Activated T-helper 2 cell treated with anti-CD3 and anti-CD28 coated beads, Interferon-gamma antibody, Interleukin-2, Interleukin-4, amounts not matched to agents 10 μg/mL and 5 μg/mL and 100 μg/mL, durations not matched to agents 14 hours and 24 hours and 36 hours (primary cell): ENCODE measurements at regions of chr12 and their contacts with region 1.

Region 1: DNA sequence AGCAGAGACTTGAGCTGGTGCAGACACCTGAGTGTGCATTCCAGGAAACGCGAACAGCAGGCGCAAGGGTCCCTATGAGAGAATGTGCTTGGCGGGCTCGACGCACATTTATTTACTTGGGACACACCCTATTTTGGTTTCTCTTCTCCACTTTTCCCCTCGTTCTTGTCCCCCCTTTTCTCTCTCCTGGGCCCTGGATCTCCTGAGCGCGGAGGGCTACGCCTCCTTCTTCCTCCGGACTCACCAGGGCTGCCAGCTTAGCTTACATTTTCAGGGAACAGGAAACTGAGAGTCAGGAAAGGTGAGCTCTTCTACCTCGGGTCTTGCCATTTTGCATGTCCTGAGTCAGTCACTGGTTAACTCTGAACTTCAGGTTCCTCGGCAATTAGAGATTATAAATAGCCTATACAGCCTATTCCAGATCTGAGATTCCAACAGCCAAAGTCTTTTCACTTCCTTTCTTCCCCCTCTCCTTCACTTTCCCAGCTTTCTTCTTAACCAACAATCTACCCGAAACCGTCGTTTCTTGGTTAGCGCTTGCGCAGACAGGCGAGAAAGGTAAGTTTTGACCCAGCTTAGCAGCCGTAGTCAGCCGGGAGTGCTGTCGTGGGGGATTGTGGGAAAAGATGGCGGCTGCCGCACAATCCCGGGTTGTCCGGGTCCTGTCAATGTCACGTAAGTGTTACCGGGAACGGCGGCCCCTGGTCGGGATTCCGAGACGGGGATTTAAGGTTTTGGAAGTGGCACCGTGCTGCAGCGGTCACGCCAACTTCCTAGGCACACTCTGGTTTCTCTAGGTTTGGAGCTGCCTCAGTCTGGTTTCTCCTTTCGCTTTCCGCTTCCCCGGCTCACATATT is at the starts of genes AKAP3 and NDUFA9:
- DNase-seq: peak; percentile 80
- H3K4me3 Mint-ChIP-seq: peak within 1 kb of the TSS; percentile 100
- H3K27ac Mint-ChIP-seq: peak within 1 kb of the TSS; percentile 97
- H3K4me1 Mint-ChIP-seq: peaks cover 42% of the 10 kb centered on the region
- H3K27me3 Mint-ChIP-seq: no peaks in the 10 kb centered on the region
- total RNA-seq, gene AKAP3: 0.55 and 0.71 TPM in 2 replicates
- total RNA-seq, gene NDUFA9: 124 and 125 TPM in 2 replicates

Region 2: DNA sequence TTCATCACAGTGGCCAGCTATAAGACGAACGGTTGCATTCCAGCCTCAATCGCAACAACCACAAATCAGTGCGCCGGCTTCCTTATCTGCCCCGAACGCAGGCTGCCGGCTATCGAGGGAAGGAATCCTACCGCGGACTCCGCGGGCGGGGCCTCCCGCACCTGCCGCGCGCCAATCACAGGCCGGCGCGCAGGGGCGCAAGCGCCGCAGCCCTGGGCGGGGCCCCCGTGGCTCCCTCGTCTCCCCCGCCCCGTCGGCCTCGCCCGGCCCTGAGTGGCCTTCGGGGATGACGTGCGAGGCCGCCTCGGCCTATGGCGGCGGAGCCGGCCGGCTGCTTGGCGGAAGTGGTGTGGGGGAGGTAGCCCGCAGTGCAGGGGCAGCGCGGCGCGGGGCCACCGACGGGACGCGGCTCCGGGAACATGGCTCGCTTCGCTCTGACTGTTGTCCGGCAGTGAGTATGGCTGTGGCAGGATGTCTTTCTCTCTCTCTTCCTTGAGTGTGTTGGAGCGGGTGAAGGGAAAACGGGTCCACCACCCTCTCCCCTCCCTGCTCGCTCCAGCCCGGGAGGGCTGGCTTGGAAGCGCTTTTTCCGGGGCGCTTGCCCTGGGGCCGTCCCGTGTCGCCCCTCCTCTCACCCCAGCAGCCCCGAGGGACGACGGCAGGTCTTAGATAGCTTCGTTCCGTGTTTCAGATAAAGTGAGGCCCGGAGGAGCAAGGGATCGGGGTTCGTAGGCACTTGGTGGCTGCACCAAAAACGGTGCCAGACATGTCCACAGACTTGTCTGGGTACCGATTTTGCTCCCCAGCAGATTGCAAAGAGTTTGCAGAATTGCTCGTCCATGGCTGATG is 327.7 kb before region 1 on chr12 and contains the start of gene TIGAR:
- intact Hi-C with region 1: loop called (anchors 5 kb)
- DNase-seq: peak; percentile 92
- H3K4me3 Mint-ChIP-seq: peak within 1 kb of the TSS; percentile 93
- H3K27ac Mint-ChIP-seq: peak within 1 kb of the TSS; percentile 76
- H3K4me1 Mint-ChIP-seq: peaks cover 35% of the 10 kb centered on the region
- H3K27me3 Mint-ChIP-seq: no peaks in the 10 kb centered on the region
- total RNA-seq, gene TIGAR: 8.7 and 9.5 TPM in 2 replicates

Region 3: DNA sequence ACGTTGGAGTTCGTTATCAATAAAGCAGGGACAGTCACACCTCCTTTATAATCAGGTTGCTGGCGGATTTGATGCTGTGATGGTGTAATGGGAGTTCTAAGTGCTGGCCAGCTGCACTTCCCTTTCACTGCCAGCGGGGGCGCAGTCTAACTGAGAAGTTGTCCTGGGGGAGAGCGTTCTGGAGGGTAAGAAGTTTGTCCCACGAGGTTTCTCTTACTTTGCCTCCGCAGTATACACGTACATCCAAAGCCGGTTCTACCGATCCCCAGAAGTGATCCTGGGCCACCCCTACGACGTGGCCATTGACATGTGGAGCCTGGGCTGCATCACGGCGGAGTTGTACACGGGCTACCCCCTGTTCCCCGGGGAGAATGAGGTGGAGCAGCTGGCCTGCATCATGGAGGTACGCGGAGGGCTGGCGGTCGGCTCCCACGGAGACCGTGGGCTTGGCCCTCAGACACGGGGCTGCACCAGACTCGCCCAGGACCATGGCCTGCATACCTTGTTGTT is 44.0 kb before region 1 on chr12:
- intact Hi-C with region 1: loop called (anchors 1 kb)
- DNase-seq: peak; percentile 70
- H3K4me3 Mint-ChIP-seq: peak overlapping the region; percentile 93
- H3K27ac Mint-ChIP-seq: peak overlapping the region; percentile 85
- H3K4me1 Mint-ChIP-seq: peaks cover 12% of the 10 kb centered on the region
- H3K27me3 Mint-ChIP-seq: peaks cover 20% of the 10 kb centered on the region

Region 4: DNA sequence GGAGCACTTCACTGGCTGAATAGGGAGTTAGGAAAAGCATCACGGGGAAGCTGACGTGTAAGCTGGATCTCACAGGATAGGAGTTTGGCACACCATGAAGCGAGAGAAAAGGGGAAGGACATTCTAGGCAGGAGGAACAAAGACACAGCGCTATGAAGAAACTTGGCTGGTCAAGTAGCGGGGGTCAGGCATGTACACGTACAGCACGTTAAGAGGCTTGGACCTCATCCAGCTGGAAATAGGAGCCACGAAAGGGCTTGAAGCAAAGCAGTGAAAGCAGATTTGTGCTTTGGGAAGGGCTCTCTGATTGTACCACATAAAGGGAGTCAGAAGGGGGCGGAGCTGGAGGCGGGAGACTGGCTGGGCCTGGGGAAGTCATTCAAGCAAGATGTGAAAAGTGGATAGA is 51.9 kb after region 1 on chr12:
- intact Hi-C with region 1: no loop called
- DNase-seq: no peak
- H3K4me3 Mint-ChIP-seq: no peak overlapping the region
- H3K27ac Mint-ChIP-seq: no peak overlapping the region
- H3K4me1 Mint-ChIP-seq: peaks cover 2% of the 10 kb centered on the region
- H3K27me3 Mint-ChIP-seq: peaks cover 1% of the 10 kb centered on the region

Region 5: DNA sequence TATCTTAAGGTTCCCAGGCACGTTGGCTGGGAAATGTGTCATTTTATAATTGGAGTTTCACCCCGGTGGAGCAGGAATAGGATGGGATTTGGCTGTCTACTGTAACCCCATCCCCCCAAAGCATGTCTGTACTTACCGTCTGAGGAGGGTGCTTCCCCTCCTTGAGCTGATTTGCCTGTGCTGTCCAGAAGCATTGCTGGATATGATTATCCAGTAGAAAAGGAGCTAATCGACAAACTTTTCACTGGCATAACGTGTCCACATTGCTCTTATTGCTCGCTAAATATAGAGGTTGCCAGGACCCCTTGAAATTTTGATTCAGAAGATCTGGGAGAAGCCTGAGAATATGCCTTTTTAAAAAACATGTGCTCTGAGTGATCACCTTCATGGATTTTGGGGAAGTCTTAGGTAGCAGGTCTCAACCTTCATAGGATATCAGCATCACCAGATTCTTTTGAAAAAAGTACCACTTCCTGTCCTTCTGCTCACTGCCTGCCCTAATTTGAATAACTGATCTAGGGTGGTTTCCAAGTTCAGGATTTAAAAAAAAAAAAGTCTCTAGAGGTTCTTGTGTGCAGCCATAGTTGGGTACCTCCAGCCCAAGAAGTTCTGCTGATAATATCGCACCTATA is 180.5 kb after region 1 on chr12:
- intact Hi-C with region 1: loop called (anchors 5 kb)
- DNase-seq: peak; percentile 17
- H3K4me3 Mint-ChIP-seq: peak overlapping the region; percentile 92
- H3K27ac Mint-ChIP-seq: peak overlapping the region; percentile 99
- H3K4me1 Mint-ChIP-seq: peaks cover 77% of the 10 kb centered on the region
- H3K27me3 Mint-ChIP-seq: no peaks in the 10 kb centered on the region